ENCODE measurements at regions of chr5 and their contacts with region 1.

Region 1: GRCh38 chr5:4879693-4880303 is 260.3 kb upstream of the ADAMTS16 start:
- DNase-seq: peak; percentile 72
- ATAC-seq: peak; percentile 65 to 74

Region 2: DNA sequence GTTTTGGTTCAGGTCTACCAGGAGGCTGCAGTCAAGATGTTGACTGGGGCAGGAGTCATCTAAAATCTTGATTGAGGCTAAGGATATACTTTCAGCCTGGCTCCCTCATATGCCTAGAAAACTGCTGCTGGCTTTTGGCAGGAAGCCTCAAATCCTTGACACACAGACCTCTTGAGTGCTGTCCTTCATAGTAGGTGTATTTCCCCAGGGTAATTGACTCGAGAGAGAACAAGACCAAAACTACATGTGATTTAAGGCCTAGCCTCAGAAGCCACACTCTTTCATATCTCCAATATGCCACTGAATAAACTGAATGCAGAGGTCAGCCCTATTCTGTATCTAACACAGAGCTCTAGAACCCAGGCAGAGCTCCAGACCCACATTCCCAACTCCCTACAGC is 141.9 kb before region 1 on chr5:
- intact Hi-C with region 1: no loop called
- DNase-seq: no peak
- ATAC-seq: no peak

Region 3: GRCh38 chr5:4941957-4942830 is 62.4 kb after region 1 on chr5:
- intact Hi-C with region 1: no loop called
- DNase-seq: no peak
- ATAC-seq: peak; percentile 31 to 34

Region 4: GRCh38 chr5:5419294-5420210 is 539.8 kb after region 1 on chr5:
- intact Hi-C with region 1: loop called in 1 of 2 experiments (anchors 5 kb)
- DNase-seq: no peak
- ATAC-seq: no peak